CD4-positive, alpha-beta memory T cell (primary cell): ENCODE measurements at regions of chr9 and their contacts with region 1.

Region 1: DNA sequence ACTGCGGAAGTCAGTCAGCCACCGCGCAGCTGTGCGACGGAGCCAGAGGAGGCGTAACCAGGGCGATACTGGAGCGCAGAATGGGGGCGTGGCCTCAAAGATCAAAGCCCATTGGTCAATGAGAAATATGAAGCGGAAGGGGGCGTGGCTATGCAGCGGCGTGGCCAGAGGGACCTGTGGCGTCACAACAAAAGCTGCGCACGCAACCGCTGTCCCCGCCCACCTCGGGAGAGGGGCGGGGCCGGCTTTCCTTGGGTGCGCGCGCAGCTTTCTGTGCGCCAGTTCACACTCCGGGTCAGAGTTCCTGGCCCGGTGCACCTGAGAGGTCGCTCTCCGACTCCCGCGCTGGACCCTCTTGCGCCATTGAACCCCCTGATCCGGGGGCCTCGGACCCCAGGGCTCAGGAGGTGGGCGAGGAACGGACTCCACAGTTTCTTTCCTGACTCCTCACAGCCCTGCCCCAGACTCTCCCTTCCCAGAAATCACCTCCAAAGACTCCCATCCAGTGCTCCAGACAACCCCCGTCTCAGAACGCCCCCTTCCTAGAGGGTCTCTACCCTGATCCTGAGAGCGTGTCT is at the starts of genes GOLGA2 and SWI5:
- DNase-seq: peak; percentile 99 to 100 (median 100)
- H3K4me3 ChIP-seq: peak within 1 kb of the TSS; percentile 88
- H3K4me3 Mint-ChIP-seq: peak within 1 kb of the TSS; percentile 94 to 98 (median 97)
- H3K27ac ChIP-seq: peak within 1 kb of the TSS; percentile 82
- H3K27ac Mint-ChIP-seq: peak within 1 kb of the TSS; percentile 92 to 99 (median 97)
- H3K4me1 ChIP-seq: peaks cover 28% of the 10 kb centered on the region
- H3K4me1 Mint-ChIP-seq: peaks cover 17 to 43% (median 32%) of the 10 kb centered on the region in 4 donors
- H3K27me3 ChIP-seq: no peaks in the 10 kb centered on the region
- H3K27me3 Mint-ChIP-seq: no peaks in the 10 kb centered on the region
- total RNA-seq, gene GOLGA2: 76.4 to 82.4 TPM
- total RNA-seq, gene SWI5: 11.5 to 14.9 TPM

Region 2: DNA sequence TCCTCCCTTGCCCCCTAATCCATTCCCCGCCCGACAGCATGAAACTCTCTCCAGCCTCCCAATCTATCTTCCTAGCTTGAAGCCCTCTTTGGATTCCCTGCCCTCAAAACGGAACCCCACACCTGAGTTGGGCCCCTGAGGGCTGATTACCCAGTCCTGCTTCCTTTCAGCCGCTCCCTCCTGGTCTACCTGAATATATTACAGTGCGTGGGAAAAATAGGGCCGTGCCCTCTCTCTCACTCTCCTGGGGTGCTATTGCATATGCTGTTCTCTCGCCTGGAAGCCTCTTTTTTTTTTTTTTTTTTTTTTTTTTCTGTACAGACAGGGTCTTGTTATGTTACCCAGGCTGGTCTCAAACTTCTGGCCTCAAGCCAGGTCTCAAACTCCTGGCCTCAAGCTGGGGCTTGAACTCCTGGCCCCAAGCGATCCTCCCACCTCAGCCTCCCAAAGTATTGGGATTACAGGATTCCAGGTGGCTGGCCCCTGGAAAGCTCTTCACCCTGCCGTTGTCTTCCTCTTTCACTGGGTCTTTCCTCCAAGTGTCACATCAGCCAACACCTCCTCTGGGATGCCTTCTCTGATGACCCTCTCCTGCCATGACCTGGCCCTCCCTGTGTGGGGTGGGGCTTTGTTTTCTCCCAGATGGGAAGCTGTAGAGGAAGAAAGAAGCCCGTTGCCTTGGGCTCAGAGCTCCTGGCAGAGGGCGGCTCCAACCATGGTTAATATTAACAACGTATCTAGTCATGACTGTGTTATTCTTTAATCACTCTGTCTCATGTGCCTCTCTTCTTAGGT is 64.7 kb before region 1 on chr9:
- CTCF ChIA-PET with region 1: no interaction called
- POLR2A ChIA-PET with region 1: no interaction called
- intact Hi-C with region 1: no loop called
- DNase-seq: no peak
- H3K4me3 ChIP-seq: no peak overlapping the region
- H3K4me3 Mint-ChIP-seq: peak overlapping the region in 1 of 8 donors; percentile 58
- H3K27ac ChIP-seq: no peak overlapping the region
- H3K27ac Mint-ChIP-seq: peak overlapping the region in 1 of 7 donors; percentile 74
- H3K4me1 ChIP-seq: no peaks in the 10 kb centered on the region
- H3K4me1 Mint-ChIP-seq: no peaks in the 10 kb centered on the region
- H3K27me3 ChIP-seq: no peaks in the 10 kb centered on the region
- H3K27me3 Mint-ChIP-seq: peaks cover 0 to 6% of the 10 kb centered on the region in 2 donors

Region 3: GRCh38 chr9:128249908-128250838 is 25.9 kb before region 1 on chr9:
- CTCF ChIA-PET with region 1: interaction called, 6 read pairs
- POLR2A ChIA-PET with region 1: interaction called, 19 read pairs
- intact Hi-C with region 1: loop called (anchors 1 kb)
- DNase-seq: peak; percentile 95 to 98 (median 96)
- H3K4me3 ChIP-seq: peak overlapping the region in 1 of 2 donors; percentile 75
- H3K4me3 Mint-ChIP-seq: peak overlapping the region; percentile 84 to 93 (median 87)
- H3K27ac ChIP-seq: peak overlapping the region; percentile 56
- H3K27ac Mint-ChIP-seq: peak overlapping the region; percentile 77 to 97 (median 94)
- H3K4me1 ChIP-seq: peaks cover 22% of the 10 kb centered on the region
- H3K4me1 Mint-ChIP-seq: peaks cover 10 to 30% (median 19%) of the 10 kb centered on the region in 4 donors
- H3K27me3 ChIP-seq: no peaks in the 10 kb centered on the region
- H3K27me3 Mint-ChIP-seq: peaks cover 4 to 5% of the 10 kb centered on the region in 2 donors

Region 4: GRCh38 chr9:128370826-128371621 is 94.9 kb after region 1 on chr9 and contains the start of gene URM1:
- CTCF ChIA-PET with region 1: interaction called, 3 read pairs
- POLR2A ChIA-PET with region 1: interaction called, 13 read pairs
- intact Hi-C with region 1: no loop called
- DNase-seq: peak; percentile 95 to 98 (median 96)
- H3K4me3 ChIP-seq: peak within 1 kb of the TSS; percentile 88 to 95
- H3K4me3 Mint-ChIP-seq: peak within 1 kb of the TSS; percentile 95 to 98 (median 96)
- H3K27ac ChIP-seq: peak within 1 kb of the TSS; percentile 91
- H3K27ac Mint-ChIP-seq: peak within 1 kb of the TSS; percentile 97 to 99 (median 98)
- H3K4me1 ChIP-seq: peaks cover 20% of the 10 kb centered on the region
- H3K4me1 Mint-ChIP-seq: peaks cover 22 to 37% (median 29%) of the 10 kb centered on the region in 4 donors
- H3K27me3 ChIP-seq: no peaks in the 10 kb centered on the region
- H3K27me3 Mint-ChIP-seq: peaks cover 2 to 4% of the 10 kb centered on the region in 2 donors
- total RNA-seq, gene URM1: 44.1 to 45.5 TPM